GM12878 (cell line): ENCODE measurements at regions of chr1 and their contacts with region 1.

Region 1: GRCh38 chr1:160681067-160681890 is 30.3 kb downstream of the CD48 start:
- DNase-seq: no peak
- ATAC-seq: peak; percentile 89
- H3K4me3 ChIP-seq: no peak overlapping the region
- H3K27ac ChIP-seq: peak overlapping the region; percentile 14; the same call in 1 of the 2 replicates
- H3K4me1 ChIP-seq: peaks cover 38% of the 10 kb centered on the region
- H3K27me3 ChIP-seq: no peaks in the 10 kb centered on the region
- CTCF ChIP-seq: peak; percentile 85 to 97 (median 95); a peak in 5 of 6 replicates
- EP300 ChIP-seq: no peak
- POLR2A ChIP-seq: peak; percentile 61; the same call in 1 of the 2 replicates
- RAD21 ChIP-seq: peak; percentile 91

Region 2: DNA sequence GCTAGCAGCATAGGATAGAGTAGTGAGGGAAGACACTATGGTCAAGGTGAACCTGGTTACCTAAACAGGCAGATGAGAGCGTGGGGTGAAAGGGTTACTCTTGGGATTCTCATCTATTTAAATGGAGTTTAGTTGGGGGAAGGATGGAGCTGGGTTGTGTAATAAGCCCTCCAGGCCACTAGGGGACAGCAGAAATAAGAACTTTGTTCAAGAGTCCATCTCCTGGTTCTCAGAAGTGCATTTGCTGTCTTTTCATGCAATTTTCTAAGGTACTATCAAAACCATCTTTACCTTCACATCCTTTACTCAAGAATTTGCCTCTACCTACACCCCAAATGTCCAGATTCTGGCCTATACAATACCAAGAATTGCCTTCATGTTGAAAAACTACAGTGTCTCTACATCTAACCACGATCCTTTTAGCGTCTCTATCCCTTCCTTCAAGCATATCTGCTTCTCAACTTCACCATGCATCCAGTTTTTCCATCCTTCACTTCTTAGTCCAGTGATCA is 62.5 kb before region 1 on chr1:
- CTCF ChIA-PET with region 1: interaction called, 92 read pairs
- POLR2A ChIA-PET with region 1: interaction called, 4 read pairs
- RAD21 ChIA-PET with region 1: interaction called, 132 read pairs
- SMC1A ChIA-PET with region 1: interaction called, 82 read pairs
- in situ Hi-C with region 1: no loop called
- intact Hi-C with region 1: no loop called
- DNase-seq: no peak
- ATAC-seq: peak; percentile 54
- H3K4me3 ChIP-seq: no peak overlapping the region
- H3K27ac ChIP-seq: no peak overlapping the region; the same call in 1 of the 2 replicates
- H3K4me1 ChIP-seq: peaks cover 28% of the 10 kb centered on the region
- H3K27me3 ChIP-seq: no peaks in the 10 kb centered on the region
- CTCF ChIP-seq: peak; percentile 72 to 88 (median 82)
- EP300 ChIP-seq: no peak
- POLR2A ChIP-seq: no peak
- RAD21 ChIP-seq: peak; percentile 75

Region 3: GRCh38 chr1:160646711-160647328 is 34.5 kb before region 1 on chr1 and contains the start of gene SLAMF1:
- CTCF ChIA-PET with region 1: interaction called, 50 read pairs
- POLR2A ChIA-PET with region 1: interaction called, 61 read pairs
- RAD21 ChIA-PET with region 1: interaction called, 117 read pairs
- SMC1A ChIA-PET with region 1: interaction called, 187 read pairs
- in situ Hi-C with region 1: no loop called
- intact Hi-C with region 1: no loop called
- DNase-seq: peak; percentile 95
- ATAC-seq: peak; percentile 63
- H3K4me3 ChIP-seq: peak within 1 kb of the TSS; percentile 95
- H3K27ac ChIP-seq: peak within 1 kb of the TSS; percentile 95
- H3K4me1 ChIP-seq: peaks cover 19% of the 10 kb centered on the region
- H3K27me3 ChIP-seq: no peaks in the 10 kb centered on the region
- CTCF ChIP-seq: no peak
- EP300 ChIP-seq: peak; percentile 5 to 19; a peak in 1 of 4 replicates
- POLR2A ChIP-seq: peak; percentile 82
- RAD21 ChIP-seq: no peak
- polyA plus RNA-seq, gene SLAMF1: 128 to 145 TPM

Region 4: DNA sequence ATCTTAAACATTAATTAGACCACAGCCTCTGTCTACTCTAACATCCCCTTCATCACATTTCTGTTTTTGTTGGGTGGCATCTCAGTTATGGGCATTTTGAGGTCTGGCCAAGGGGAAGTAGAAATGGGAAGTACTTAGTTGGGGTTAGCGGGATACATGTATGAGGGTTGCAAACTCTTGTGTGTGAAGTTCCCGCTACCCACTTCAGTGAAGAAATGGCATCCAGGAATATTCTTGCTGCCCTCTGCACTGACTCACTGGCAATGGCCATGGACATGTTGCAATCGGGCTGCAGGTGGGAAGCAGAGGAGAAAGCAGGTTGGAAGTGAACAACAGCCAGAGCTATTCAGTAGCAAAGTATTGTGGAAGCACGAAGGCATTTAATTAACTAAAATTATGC is 23.0 kb after region 1 on chr1:
- CTCF ChIA-PET with region 1: interaction called, 59 read pairs
- POLR2A ChIA-PET with region 1: interaction called, 11 read pairs
- RAD21 ChIA-PET with region 1: interaction called, 42 read pairs
- SMC1A ChIA-PET with region 1: interaction called, 79 read pairs
- in situ Hi-C with region 1: no loop called
- intact Hi-C with region 1: no loop called
- DNase-seq: no peak
- ATAC-seq: peak; percentile 1; the same call in 1 of the 3 replicates
- H3K4me3 ChIP-seq: peak overlapping the region; percentile 59
- H3K27ac ChIP-seq: peak overlapping the region; percentile 3; the same call in 1 of the 2 replicates
- H3K4me1 ChIP-seq: peaks cover 7% of the 10 kb centered on the region; the same call in 1 of the 2 replicates
- H3K27me3 ChIP-seq: no peaks in the 10 kb centered on the region
- CTCF ChIP-seq: no peak
- EP300 ChIP-seq: no peak
- POLR2A ChIP-seq: no peak
- RAD21 ChIP-seq: no peak

Region 5: GRCh38 chr1:160717306-160717705 is 36.0 kb after region 1 on chr1:
- CTCF ChIA-PET with region 1: interaction called, 95 read pairs
- POLR2A ChIA-PET with region 1: no interaction called
- RAD21 ChIA-PET with region 1: interaction called, 9 read pairs
- SMC1A ChIA-PET with region 1: interaction called, 70 read pairs
- in situ Hi-C with region 1: no loop called
- intact Hi-C with region 1: loop called (anchors 5 kb)
- DNase-seq: no peak
- ATAC-seq: no peak
- H3K4me3 ChIP-seq: no peak overlapping the region
- H3K27ac ChIP-seq: no peak overlapping the region
- H3K4me1 ChIP-seq: peaks cover 14% of the 10 kb centered on the region
- H3K27me3 ChIP-seq: no peaks in the 10 kb centered on the region
- CTCF ChIP-seq: no peak
- EP300 ChIP-seq: no peak
- POLR2A ChIP-seq: no peak
- RAD21 ChIP-seq: no peak

Region 6: GRCh38 chr1:160726498-160727315 is 45.4 kb after region 1 on chr1:
- CTCF ChIA-PET with region 1: interaction called, 95 read pairs
- POLR2A ChIA-PET with region 1: interaction called, 3 read pairs
- RAD21 ChIA-PET with region 1: interaction called, 18 read pairs
- SMC1A ChIA-PET with region 1: interaction called, 70 read pairs
- in situ Hi-C with region 1: no loop called
- intact Hi-C with region 1: loop called (anchors 1 kb)
- DNase-seq: no peak
- ATAC-seq: peak; percentile 80
- H3K4me3 ChIP-seq: no peak overlapping the region
- H3K27ac ChIP-seq: peak overlapping the region; percentile 85
- H3K4me1 ChIP-seq: peaks cover 40% of the 10 kb centered on the region
- H3K27me3 ChIP-seq: no peaks in the 10 kb centered on the region
- CTCF ChIP-seq: peak; percentile 81 to 92 (median 91); a peak in 5 of 6 replicates
- EP300 ChIP-seq: no peak
- POLR2A ChIP-seq: no peak
- RAD21 ChIP-seq: peak; percentile 99

Region 7: DNA sequence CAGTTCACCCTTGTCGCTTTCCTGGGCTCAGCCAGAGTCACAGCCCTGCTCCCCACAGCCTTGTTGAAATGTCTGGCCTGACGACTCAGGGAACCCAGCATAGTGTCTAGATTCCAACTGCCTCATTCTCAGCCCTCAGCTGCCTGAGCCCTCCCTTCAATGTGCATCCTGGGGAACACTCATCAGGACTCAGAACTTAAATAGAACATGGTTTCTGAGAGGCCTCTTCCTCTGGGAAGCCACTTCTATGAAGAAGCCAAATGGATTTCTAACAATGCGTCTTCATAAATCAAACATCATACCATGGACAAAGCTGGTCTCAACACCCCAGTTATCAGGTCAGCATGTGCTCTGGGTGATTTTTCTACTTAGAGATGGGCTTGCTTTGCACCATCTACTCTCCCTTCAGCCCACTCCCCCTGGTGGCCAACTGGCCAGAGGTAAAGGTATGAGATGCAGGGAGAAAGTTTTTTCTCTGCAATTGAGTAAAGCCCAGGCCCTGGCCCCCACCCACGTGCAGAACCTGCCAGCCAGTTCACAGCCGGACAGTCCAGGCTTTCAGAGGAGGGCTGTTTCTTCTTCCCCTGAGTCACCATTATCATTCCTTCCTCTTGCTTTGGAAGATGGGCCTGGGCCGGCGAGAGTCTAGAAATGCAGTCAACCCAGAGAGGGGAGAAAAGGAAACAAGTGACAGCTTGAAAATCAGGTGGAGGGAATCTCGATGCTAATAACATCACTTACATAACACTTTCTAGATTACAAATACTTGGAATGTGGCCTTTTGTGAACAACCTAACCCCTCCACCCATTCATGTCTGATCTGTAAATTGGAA is 149.3 kb after region 1 on chr1:
- CTCF ChIA-PET with region 1: interaction called, 14 read pairs
- POLR2A ChIA-PET with region 1: interaction called, 3 read pairs
- RAD21 ChIA-PET with region 1: interaction called, 3 read pairs
- SMC1A ChIA-PET with region 1: interaction called, 8 read pairs
- in situ Hi-C with region 1: no loop called
- intact Hi-C with region 1: no loop called
- DNase-seq: no peak
- ATAC-seq: peak; percentile 98
- H3K4me3 ChIP-seq: no peak overlapping the region
- H3K27ac ChIP-seq: no peak overlapping the region
- H3K4me1 ChIP-seq: no peaks in the 10 kb centered on the region
- H3K27me3 ChIP-seq: no peaks in the 10 kb centered on the region
- CTCF ChIP-seq: peak; percentile 67 to 87 (median 76)
- EP300 ChIP-seq: no peak
- POLR2A ChIP-seq: no peak
- RAD21 ChIP-seq: peak; percentile 84